A549 (cell line): ENCODE measurements at regions of chr18 and their contacts with region 1.

Region 1: GRCh38 chr18:8478166-8478967 is 130.9 kb upstream of the RAB12 start:
- DNase-seq: peak; percentile 51 to 67
- ATAC-seq: peak; percentile 85 to 94
- H3K4me3 ChIP-seq: no peak overlapping the region
- H3K27ac ChIP-seq: no peak overlapping the region
- H3K4me1 ChIP-seq: no peaks in the 10 kb centered on the region; the same call in 2 of the 3 replicates
- CTCF ChIP-seq: peak; percentile 43; the same call in 2 of the 3 replicates
- EP300 ChIP-seq: no peak
- POLR2A ChIP-seq: no peak
- RAD21 ChIP-seq: peak in 1 of 2 experiments; percentile 27; a peak in 3 of 5 replicates

Region 2: GRCh38 chr18:7221424-7222155 is 1256.8 kb before region 1 on chr18:
- CTCF ChIA-PET with region 1: interaction called, 27 read pairs
- POLR2A ChIA-PET with region 1: no interaction called
- DNase-seq: peak; percentile 26 to 79
- ATAC-seq: peak; percentile 98 to 99
- H3K4me3 ChIP-seq: no peak overlapping the region
- H3K27ac ChIP-seq: no peak overlapping the region
- H3K4me1 ChIP-seq: no peaks in the 10 kb centered on the region
- CTCF ChIP-seq: peak; percentile 74
- EP300 ChIP-seq: no peak
- POLR2A ChIP-seq: no peak
- RAD21 ChIP-seq: peak; percentile 84 to 86

Region 3: GRCh38 chr18:7566567-7567473 is 911.5 kb before region 1 on chr18 and contains the start of gene PTPRM:
- CTCF ChIA-PET with region 1: interaction called, 12 read pairs
- POLR2A ChIA-PET with region 1: no interaction called
- DNase-seq: peak; percentile 52 to 65
- ATAC-seq: peak; percentile 82 to 83
- H3K4me3 ChIP-seq: peak within 1 kb of the TSS; percentile 85
- H3K27ac ChIP-seq: peak within 1 kb of the TSS; percentile 83 to 98
- H3K4me1 ChIP-seq: peaks cover 17% of the 10 kb centered on the region
- CTCF ChIP-seq: peak; percentile 74
- EP300 ChIP-seq: no peak
- POLR2A ChIP-seq: 0 out of 2 replicates have a peak, but pooled peaks have one; percentile 20
- RAD21 ChIP-seq: peak; percentile 5 to 63; a peak in 3 of 5 replicates
- polyA plus RNA-seq, gene PTPRM: 199 and 236 TPM in 2 replicates

Region 4: DNA sequence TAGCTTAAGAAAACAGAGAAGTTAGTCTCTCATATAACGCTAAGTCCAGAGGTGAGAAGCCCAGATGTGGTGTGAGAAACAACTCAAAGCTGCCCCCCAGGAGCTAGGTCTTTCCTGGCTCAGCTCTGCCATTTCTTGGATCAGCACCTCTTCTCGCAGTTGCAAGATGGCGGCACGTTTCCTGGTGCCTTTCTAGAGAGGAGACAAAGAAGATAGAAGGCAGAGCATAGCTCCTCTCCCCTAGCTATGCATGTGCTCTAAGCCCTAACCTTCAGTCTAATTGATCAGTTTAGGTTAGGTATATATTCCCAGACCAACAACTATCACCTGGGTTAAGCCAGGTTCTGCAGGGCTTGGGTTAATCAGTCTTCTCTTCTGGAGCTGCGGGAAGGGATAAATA is 11.4 kb after region 1 on chr18:
- CTCF ChIA-PET with region 1: interaction called, 13 read pairs
- POLR2A ChIA-PET with region 1: no interaction called
- DNase-seq: no peak
- ATAC-seq: no peak
- H3K4me3 ChIP-seq: no peak overlapping the region
- H3K27ac ChIP-seq: no peak overlapping the region
- H3K4me1 ChIP-seq: no peaks in the 10 kb centered on the region
- CTCF ChIP-seq: no peak
- EP300 ChIP-seq: no peak
- POLR2A ChIP-seq: no peak
- RAD21 ChIP-seq: no peak